Right ventricle myocardium inferior (tissue), 1 donor: ENCODE measurements at regions of chr22 and their contacts with region 1.

Region 1: DNA sequence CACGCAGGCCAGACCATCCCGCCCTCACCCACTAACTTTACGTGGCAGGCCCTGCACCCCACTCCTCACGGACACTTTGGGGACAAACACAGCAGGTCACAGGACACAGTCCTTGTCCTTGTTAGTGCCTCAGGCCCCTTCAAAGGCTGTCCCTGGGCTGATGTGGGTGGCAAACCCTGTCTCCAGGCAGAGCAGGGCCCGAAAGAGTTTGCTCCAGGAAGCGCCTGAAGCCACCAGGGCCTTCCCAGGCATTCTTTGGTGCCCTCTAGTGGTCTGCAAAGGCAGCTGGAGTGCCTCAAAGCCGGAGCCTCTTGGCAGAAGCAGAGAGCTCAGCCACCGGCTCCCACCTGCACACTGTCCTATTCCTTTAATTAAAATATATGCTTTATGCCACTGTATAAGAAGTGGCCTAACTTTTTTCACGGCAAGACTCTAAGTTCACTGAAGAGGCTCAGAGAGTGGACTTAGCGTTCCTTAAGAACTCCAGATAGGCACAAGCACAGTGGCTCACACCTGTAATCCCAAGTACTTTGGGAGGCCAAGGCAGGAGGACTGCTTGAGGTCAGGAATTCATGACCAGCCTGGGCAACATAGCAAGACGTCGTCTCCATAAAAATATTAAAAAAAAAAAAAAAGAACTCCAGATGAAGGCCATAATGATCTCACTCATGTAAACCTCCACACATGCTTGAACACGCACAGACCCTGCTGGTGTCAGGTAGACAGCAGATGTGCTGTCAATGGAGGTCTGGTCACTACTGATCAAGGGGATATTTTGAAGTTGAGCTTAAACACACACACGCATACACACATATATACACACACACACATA is 11.1 kb downstream of the TXN2 start:
- DNase-seq: peak; percentile 82
- ATAC-seq: peak; percentile 77

Region 2: GRCh38 chr22:35739076-35739930 is 731.1 kb before region 1 on chr22:
- intact Hi-C with region 1: no loop called
- DNase-seq: no peak
- ATAC-seq: peak; percentile 47

Region 3: DNA sequence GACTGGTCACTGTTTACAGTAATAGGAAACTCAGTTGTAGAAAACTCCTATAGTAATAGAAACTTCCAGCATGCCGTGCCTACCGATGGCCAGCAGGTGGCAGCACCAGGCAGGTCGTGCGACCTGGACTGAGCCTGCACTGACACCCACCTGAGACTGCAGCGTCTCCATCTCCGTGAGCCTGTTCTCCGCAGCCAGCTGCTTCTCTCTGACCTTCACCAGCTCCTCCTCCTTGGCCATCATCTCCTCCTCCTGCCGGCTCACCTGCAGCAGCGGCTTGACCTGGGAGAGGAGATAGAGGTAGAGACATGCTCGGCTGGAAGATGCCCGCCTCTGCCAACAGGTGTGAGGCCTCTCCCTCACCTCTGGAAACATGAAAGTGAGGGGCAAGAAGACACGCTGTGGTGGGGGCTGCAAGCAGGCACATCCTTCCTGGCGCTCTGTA is 169.0 kb before region 1 on chr22:
- intact Hi-C with region 1: loop called (anchors 1 kb)
- DNase-seq: no peak
- ATAC-seq: peak; percentile 55

Region 4: DNA sequence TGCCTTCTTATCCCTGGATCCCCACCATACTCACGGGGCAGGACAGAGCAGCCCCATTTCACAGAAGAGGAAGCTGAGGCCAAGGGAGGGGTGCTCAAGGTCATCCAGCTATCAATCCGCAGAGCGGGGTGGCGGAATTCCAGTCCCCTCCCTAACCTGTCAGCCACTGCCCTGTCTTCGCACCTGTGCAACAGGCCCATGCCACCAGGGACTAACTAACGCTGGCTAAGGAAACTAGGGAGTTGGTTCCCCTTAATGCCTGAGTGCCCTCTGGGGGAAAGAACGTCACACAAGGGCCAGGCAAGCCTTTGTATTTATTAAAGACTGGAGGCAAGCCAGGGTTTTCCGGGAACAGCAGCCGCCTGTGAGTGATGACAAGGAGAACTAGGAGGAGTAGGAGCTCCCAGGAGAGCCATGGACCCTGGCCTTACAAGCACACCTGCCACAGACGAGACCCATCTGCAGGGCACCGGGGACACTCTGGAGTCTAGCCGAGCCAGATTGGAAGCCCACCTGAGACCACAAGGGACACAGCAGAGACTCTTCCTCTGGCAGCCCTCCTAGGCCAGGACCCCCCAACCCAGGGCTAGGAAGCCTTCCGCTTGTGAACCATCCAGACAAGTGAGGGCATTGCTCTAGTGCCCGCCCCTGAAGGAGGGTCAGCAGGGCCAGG is 147.1 kb before region 1 on chr22:
- intact Hi-C with region 1: loop called (anchors 5 kb)
- DNase-seq: no peak
- ATAC-seq: peak; percentile 67

Region 5: DNA sequence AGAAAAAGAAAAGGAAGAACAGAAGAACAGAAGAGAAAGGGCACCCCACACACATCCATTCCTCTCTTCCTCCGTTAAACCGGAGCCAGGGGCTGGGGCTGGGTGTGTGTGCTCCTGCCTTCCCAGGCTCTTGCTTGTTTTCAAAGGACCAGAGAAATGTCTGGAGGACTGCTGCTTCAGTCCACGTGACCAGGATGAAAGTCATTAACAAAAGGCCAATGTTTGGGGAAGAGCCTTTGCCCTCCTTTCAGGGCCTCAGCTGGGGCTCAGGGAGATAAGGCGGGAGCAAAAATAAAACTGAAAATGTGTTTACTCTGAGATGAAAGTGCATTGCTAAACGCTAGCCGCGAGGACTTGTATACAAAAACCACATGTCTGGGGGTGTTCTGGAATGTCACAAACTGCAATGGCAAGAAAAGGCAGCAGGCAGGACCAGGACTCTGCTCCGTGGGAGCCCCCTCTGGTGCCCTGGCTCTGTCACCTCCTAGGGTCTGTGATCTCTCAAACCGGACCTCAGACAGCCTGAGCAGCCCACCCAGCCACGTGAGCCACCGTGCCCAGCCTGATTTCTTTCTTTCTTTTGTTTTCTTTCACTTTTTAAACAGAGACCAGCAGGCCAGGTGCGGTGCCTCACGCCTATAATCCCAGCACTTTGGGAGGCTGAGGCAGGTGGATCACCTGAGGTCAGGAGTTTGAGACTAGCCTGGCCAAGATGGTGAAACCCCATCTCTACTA is 51.0 kb before region 1 on chr22:
- intact Hi-C with region 1: loop called (anchors 5 kb)
- DNase-seq: no peak
- ATAC-seq: peak; percentile 82

Region 6: DNA sequence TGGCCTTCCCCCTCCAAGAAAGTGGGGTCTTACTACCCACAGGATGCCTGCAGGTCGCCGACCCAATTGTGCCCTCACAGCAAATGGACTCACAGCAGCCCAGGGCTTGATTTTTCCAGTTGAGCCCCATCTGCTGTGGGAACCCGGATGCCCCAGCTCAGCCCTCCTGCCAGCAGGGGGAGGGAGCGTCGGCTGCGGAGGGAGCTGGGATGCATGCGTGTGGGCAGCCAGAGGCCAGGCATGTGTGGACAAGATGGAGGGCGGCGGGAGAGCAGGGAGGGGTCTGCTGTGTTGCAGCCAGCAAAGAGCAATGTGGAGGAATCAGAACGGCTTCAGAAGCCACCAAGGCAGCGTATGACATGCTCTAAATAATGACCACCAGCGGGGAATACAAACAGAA is 99.6 kb after region 1 on chr22:
- intact Hi-C with region 1: no loop called
- DNase-seq: no peak
- ATAC-seq: no peak